GM10248 (cell line): ENCODE measurements at regions of chr15 and their contacts with region 1.

Region 1: GRCh38 chr15:67433495-67434099 is 87.3 kb upstream of the C15orf61 start:
- DNase-seq: peak; percentile 52
- CTCF ChIP-seq: peak; percentile 71

Region 2: DNA sequence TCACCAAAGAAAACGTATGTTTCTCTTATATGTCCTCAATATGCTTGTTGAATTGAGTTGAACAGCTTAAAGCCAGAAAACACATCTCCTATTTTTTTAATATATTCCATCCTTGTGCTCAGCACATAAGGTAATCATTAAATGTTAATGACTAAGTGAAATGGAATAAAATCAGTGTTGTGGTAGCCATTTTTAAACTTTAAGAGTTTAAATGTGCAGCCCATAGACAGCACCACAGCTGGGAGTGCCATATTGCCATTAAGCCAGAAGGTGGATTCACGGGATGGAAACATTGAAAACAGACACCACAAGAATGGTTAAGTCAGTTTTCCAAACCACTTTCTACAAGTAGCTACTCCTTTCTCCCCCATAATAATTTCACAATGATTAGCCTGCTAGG is 10.5 kb after region 1 on chr15:
- CTCF ChIA-PET with region 1: interaction called, 32 read pairs
- POLR2A ChIA-PET with region 1: no interaction called
- DNase-seq: no peak
- CTCF ChIP-seq: no peak

Region 3: GRCh38 chr15:67495585-67495984 is 62.0 kb after region 1 on chr15:
- CTCF ChIA-PET with region 1: no interaction called
- POLR2A ChIA-PET with region 1: no interaction called
- DNase-seq: no peak
- CTCF ChIP-seq: no peak